Activated B cell treated with CpG ODN at 0.5 μM for 24 hours (primary cell): ENCODE measurements at regions of chr7 and their contacts with region 1.

Region 1: DNA sequence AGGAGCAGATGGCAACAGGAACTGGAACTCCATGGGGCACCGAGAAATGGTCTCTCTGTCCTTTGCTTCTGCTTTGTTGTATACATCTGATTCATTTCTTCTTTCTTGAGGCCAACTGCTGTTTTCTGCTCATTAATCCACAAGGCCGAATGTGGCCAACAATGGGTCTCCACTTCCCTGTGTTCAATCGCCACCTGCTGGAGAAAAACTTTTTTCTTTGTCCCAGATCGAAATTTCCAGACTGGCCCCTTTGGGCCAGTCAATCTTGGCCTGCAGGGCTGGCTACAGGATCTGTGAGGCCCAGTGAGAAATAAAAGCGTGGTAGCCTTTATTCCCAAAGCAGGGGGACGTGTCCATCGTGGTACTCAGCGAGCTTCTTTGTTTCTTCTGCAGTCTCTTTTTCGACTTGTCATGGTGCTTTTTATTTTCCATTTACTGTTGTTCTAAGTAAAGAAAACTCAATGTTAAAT is 58.8 kb downstream of the PARP12 start:
- DNase-seq: no peak
- ATAC-seq: peak; percentile 49
- H3K4me3 Mint-ChIP-seq: no peak overlapping the region
- H3K27ac Mint-ChIP-seq: no peak overlapping the region
- H3K4me1 Mint-ChIP-seq: peaks cover 2% of the 10 kb centered on the region
- H3K27me3 Mint-ChIP-seq: no peaks in the 10 kb centered on the region
- CTCF ChIP-seq: no peak

Region 2: DNA sequence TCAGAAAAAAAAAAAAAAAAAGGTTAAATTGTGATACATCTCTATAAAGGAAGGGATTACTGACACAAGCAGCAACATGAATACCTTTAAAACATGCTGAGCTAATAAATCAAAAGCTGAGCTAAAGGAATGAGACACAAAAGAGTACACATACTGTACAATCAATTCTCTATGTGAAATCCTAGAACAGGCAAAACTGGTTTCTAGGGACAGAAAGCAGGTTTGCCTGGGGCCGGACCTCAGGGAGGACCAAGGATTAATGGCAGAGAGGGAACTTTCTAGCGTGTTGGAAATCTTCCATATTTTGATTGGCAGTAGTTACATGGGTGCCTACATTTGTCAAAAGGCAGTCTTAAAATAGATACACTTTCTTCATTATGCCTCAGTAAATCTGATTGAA is 572.9 kb before region 1 on chr7:
- CTCF ChIA-PET with region 1: no interaction called
- POLR2A ChIA-PET with region 1: no interaction called
- intact Hi-C with region 1: loop called (anchors 2 kb)
- DNase-seq: no peak
- ATAC-seq: no peak
- H3K4me3 Mint-ChIP-seq: no peak overlapping the region
- H3K27ac Mint-ChIP-seq: no peak overlapping the region
- H3K4me1 Mint-ChIP-seq: peaks cover 8% of the 10 kb centered on the region
- H3K27me3 Mint-ChIP-seq: no peaks in the 10 kb centered on the region
- CTCF ChIP-seq: no peak

Region 3: DNA sequence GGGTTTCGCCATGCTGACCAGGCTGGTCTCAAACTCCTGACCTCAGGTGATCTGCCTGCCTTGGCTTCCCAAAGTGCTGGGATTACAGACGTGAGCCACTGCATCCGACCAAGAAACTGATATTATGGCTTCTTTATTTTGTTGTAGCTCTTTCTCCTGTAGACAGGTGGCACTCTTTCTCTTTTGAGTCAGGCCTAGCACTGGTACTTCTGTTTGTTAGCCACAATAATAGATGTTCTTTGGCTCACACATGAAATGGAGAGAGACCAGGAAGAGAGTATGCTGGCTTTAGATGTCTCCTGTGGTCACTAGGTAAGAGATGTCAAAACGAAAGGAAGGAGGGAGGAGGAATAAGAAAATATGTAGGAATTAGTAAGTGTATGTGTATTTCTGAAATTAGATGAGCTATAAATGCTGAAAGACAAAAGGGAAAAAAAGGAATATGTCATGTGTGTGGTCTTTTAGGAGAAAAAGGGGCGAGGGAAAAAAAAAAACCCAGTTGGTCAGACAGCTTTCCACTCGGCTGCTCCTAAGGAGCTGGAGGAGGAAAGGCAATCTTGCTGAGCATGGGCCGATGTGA is 401.7 kb before region 1 on chr7:
- CTCF ChIA-PET with region 1: interaction called, 12 read pairs
- POLR2A ChIA-PET with region 1: no interaction called
- intact Hi-C with region 1: loop called (anchors 1 kb)
- DNase-seq: no peak
- ATAC-seq: no peak
- H3K4me3 Mint-ChIP-seq: no peak overlapping the region
- H3K27ac Mint-ChIP-seq: no peak overlapping the region
- H3K4me1 Mint-ChIP-seq: no peaks in the 10 kb centered on the region
- H3K27me3 Mint-ChIP-seq: no peaks in the 10 kb centered on the region
- CTCF ChIP-seq: no peak

Region 4: DNA sequence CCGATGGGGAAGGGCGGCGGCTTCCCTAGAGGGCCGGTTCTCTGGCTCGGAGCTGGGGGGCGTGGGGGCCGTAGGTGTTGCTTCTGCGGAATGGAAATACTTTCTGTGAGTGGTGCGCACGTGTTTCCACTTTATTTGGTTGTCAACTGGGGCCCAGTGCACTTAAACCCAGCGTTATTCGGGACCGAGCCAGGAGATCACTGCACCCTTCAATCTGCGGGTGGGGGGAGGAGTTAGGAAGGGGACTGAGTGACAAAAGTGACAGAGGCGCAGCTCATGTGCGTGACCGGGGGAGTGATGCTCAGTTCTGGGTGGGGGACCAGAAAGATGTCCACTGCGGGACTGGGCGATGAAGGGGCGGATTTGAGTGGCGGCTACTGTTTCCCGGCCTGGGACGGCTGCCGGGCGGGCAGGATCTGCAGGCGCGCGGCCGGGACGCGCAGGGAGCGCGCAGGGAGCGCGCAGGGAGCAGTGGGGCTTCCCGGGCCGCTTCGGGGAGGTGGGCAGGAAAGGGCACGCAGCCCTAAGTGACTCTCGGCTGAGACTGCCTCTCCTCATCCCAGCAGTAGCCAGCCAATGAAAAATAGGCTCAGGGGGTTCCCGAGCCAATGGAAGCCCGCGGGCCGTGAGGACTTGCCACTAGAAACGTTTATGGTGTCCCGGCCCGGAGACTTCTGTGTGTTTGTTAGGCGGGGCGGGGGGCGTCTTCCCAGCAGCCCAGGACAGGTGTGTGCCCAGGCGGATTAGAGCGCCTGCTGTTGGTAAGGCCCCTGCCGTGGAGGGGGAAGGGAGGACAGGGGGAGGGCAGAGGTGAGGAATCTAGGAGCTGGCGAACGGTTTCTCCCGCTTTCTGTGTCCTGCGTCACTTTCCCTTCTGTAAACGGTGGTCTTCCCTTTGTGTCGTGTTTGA is 227.2 kb after region 1 on chr7:
- CTCF ChIA-PET with region 1: no interaction called
- POLR2A ChIA-PET with region 1: no interaction called
- intact Hi-C with region 1: no loop called
- DNase-seq: no peak
- ATAC-seq: peak; percentile 30
- H3K4me3 Mint-ChIP-seq: peak overlapping the region; percentile 91
- H3K27ac Mint-ChIP-seq: peak overlapping the region; percentile 95
- H3K4me1 Mint-ChIP-seq: peaks cover 59% of the 10 kb centered on the region
- H3K27me3 Mint-ChIP-seq: no peaks in the 10 kb centered on the region
- CTCF ChIP-seq: no peak

Region 5: GRCh38 chr7:140304191-140304799 is 300.3 kb after region 1 on chr7:
- CTCF ChIA-PET with region 1: interaction called, 3 read pairs
- POLR2A ChIA-PET with region 1: no interaction called
- intact Hi-C with region 1: loop called (anchors 2 kb)
- DNase-seq: no peak
- ATAC-seq: peak; percentile 96
- H3K4me3 Mint-ChIP-seq: peak overlapping the region; percentile 39
- H3K27ac Mint-ChIP-seq: peak overlapping the region; percentile 90
- H3K4me1 Mint-ChIP-seq: peaks cover 5% of the 10 kb centered on the region
- H3K27me3 Mint-ChIP-seq: no peaks in the 10 kb centered on the region
- CTCF ChIP-seq: no peak